Activated T-helper 1 cell treated with anti-CD3 and anti-CD28 coated beads, Interleukin-12 subunit alpha, Interleukin-12 subunit beta, Interleukin-2, Interleukin-4 antibody, amounts not matched to agents 30 ng/mL and 10 ng/mL and 1 ng/mL, durations not matched to agents 14 hours and 24 hours and 36 hours (primary cell): ENCODE measurements at regions of chr6 and their contacts with region 1.

Region 1: GRCh38 chr6:25962149-25963127 is at the start of gene TRIM38:
- DNase-seq: peak; percentile 76
- H3K4me3 Mint-ChIP-seq: peak within 1 kb of the TSS; percentile 94
- H3K27ac Mint-ChIP-seq: peak within 1 kb of the TSS; percentile 95
- H3K4me1 Mint-ChIP-seq: peaks cover 85% of the 10 kb centered on the region
- H3K27me3 Mint-ChIP-seq: no peaks in the 10 kb centered on the region
- total RNA-seq, gene TRIM38: 24.5 and 25.3 TPM in 2 replicates

Region 2: GRCh38 chr6:25369433-25370181 is 592.8 kb before region 1 on chr6:
- intact Hi-C with region 1: loop called (anchors 5 kb)
- DNase-seq: peak; percentile 7
- H3K4me3 Mint-ChIP-seq: peak overlapping the region; percentile 62
- H3K27ac Mint-ChIP-seq: peak overlapping the region; percentile 91
- H3K4me1 Mint-ChIP-seq: peaks cover 73% of the 10 kb centered on the region
- H3K27me3 Mint-ChIP-seq: no peaks in the 10 kb centered on the region

Region 3: GRCh38 chr6:25842526-25843277 is 119.7 kb before region 1 on chr6:
- intact Hi-C with region 1: loop called (anchors 5 kb)
- DNase-seq: no peak
- H3K4me3 Mint-ChIP-seq: no peak overlapping the region
- H3K27ac Mint-ChIP-seq: no peak overlapping the region
- H3K4me1 Mint-ChIP-seq: no peaks in the 10 kb centered on the region
- H3K27me3 Mint-ChIP-seq: peaks cover 2% of the 10 kb centered on the region

Region 4: GRCh38 chr6:25852756-25853155 is 109.7 kb before region 1 on chr6:
- intact Hi-C with region 1: no loop called
- DNase-seq: no peak
- H3K4me3 Mint-ChIP-seq: no peak overlapping the region
- H3K27ac Mint-ChIP-seq: no peak overlapping the region
- H3K4me1 Mint-ChIP-seq: peaks cover 15% of the 10 kb centered on the region
- H3K27me3 Mint-ChIP-seq: no peaks in the 10 kb centered on the region

Region 5: DNA sequence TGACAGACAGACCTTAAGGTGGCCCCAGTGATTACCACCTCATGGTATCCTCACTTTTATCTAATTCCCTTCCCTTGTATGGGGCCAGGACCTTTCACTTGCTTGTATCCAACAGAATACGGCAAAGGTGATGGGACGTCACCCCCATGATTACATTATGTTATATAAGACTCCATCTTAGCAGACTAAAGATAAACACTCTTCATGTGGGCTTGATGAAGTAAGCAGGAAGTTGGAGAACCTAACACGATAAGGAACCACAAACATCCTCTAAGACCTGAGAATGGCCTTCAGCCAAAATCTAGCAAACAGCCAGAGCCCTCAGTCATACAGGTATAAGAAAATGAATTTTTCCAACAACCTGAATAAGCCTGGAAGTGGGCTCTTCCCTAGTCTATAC is 96.4 kb before region 1 on chr6:
- intact Hi-C with region 1: no loop called
- DNase-seq: peak; percentile 10
- H3K4me3 Mint-ChIP-seq: no peak overlapping the region
- H3K27ac Mint-ChIP-seq: peak overlapping the region; percentile 25
- H3K4me1 Mint-ChIP-seq: peaks cover 22% of the 10 kb centered on the region
- H3K27me3 Mint-ChIP-seq: peaks cover under 1% of the 10 kb centered on the region

Region 6: DNA sequence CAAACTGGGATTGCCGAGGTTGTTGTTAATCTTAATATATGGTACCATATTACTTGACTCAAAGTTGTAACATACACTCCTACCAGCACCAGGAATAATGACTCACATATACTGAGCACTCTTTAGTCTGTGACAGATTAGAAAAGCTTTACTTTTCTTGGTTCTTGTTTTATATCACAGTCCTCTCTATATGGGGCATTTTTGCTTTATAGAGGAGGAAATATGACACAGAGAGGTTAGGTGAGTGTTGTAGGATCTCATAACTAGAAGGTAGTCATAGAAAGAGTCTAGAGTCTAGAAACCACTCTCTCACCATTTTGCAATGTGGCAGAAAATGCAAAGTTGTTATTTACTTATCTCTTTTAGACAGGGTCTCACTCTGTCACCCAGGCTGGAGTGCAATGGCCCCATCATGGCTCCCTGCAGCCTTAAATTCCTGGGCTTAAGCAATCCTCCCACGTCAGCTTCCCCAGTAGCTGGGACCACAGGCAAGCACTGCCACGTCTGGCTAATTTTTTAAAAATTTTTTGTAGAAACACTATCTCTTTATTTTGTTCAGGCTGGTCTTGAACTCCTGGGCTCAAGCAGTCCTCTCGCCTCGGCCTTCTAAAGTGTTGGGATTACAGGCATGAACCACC is 13.6 kb after region 1 on chr6:
- intact Hi-C with region 1: loop called (anchors 1 kb)
- DNase-seq: no peak
- H3K4me3 Mint-ChIP-seq: no peak overlapping the region
- H3K27ac Mint-ChIP-seq: peak overlapping the region; percentile 58
- H3K4me1 Mint-ChIP-seq: peaks cover 54% of the 10 kb centered on the region
- H3K27me3 Mint-ChIP-seq: no peaks in the 10 kb centered on the region

Region 7: DNA sequence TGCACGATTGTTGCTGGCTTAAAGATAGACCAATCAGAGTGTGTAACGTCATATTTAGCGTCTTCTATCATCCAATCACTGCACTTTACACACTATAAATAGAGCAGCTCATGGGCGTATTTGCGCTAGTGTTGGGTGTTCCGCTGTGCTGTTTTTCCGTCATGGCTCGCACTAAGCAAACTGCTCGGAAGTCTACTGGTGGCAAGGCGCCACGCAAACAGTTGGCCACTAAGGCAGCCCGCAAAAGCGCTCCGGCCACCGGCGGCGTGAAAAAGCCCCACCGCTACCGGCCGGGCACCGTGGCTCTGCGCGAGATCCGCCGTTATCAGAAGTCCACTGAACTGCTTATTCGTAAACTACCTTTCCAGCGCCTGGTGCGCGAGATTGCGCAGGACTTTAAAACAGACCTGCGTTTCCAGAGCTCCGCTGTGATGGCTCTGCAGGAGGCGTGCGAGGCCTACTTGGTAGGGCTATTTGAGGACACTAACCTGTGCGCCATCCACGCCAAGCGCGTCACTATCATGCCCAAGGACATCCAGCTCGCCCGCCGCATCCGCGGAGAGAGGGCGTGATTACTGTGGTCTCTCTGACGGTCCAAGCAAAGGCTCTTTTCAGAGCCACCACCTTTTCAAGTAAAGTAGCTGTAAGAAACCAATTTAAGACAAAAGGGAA is 58.0 kb after region 1 on chr6:
- intact Hi-C with region 1: loop called (anchors 1 kb)
- DNase-seq: peak; percentile 80
- H3K4me3 Mint-ChIP-seq: peak overlapping the region; percentile 98
- H3K27ac Mint-ChIP-seq: peak overlapping the region; percentile 100
- H3K4me1 Mint-ChIP-seq: peaks cover 61% of the 10 kb centered on the region
- H3K27me3 Mint-ChIP-seq: peaks cover 2% of the 10 kb centered on the region